ENCODE measurements at regions of chr4 and their contacts with region 1.

Region 1: GRCh38 chr4:139099366-139099982 is 77.5 kb downstream of the ELF2 start:
- DNase-seq: peak; percentile 56 to 81 (median 64)
- H3K4me3 ChIP-seq: no peak overlapping the region
- H3K4me3 Mint-ChIP-seq: no peak overlapping the region
- H3K27ac ChIP-seq: no peak overlapping the region
- H3K27ac Mint-ChIP-seq: peak overlapping the region in 1 of 8 donors; percentile 4
- H3K4me1 ChIP-seq: no peaks in the 10 kb centered on the region
- H3K4me1 Mint-ChIP-seq: peaks cover 0 to 4% (median 2%) of the 10 kb centered on the region in 3 donors
- H3K27me3 ChIP-seq: no peaks in the 10 kb centered on the region
- H3K27me3 Mint-ChIP-seq: no peaks in the 10 kb centered on the region

Region 2: DNA sequence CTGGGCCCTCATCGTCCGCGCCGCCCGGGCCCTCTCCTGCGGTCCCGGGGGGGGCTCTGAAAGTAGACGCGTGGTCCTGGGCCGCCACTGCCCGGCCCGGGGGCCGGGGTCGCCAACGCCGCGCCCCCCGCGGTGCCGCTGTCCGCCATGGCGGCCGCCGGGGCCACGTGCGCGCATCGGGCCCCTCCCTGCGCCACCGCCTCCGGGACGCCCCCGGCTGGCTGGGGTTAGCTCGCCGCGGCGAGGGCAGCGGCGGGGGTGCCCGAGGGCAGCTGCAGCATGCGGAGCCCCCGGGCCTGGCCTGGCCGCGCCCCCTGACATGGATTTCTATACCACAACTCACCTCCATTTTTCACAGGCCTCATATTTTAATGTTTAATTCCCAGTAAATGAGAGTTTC is 15.8 kb after region 1 on chr4:
- CTCF ChIA-PET with region 1: no interaction called
- POLR2A ChIA-PET with region 1: no interaction called
- DNase-seq: no peak
- H3K4me3 ChIP-seq: no peak overlapping the region
- H3K4me3 Mint-ChIP-seq: no peak overlapping the region
- H3K27ac ChIP-seq: no peak overlapping the region
- H3K27ac Mint-ChIP-seq: no peak overlapping the region
- H3K4me1 ChIP-seq: no peaks in the 10 kb centered on the region
- H3K4me1 Mint-ChIP-seq: no peaks in the 10 kb centered on the region
- H3K27me3 ChIP-seq: no peaks in the 10 kb centered on the region
- H3K27me3 Mint-ChIP-seq: no peaks in the 10 kb centered on the region

Region 3: GRCh38 chr4:139163806-139164206 is 64.3 kb after region 1 on chr4:
- CTCF ChIA-PET with region 1: no interaction called
- POLR2A ChIA-PET with region 1: interaction called, 14 read pairs
- DNase-seq: no peak
- H3K4me3 ChIP-seq: no peak overlapping the region
- H3K4me3 Mint-ChIP-seq: no peak overlapping the region
- H3K27ac ChIP-seq: no peak overlapping the region
- H3K27ac Mint-ChIP-seq: no peak overlapping the region
- H3K4me1 ChIP-seq: no peaks in the 10 kb centered on the region
- H3K4me1 Mint-ChIP-seq: peaks cover 12 to 21% (median 15%) of the 10 kb centered on the region in 3 donors
- H3K27me3 ChIP-seq: no peaks in the 10 kb centered on the region
- H3K27me3 Mint-ChIP-seq: no peaks in the 10 kb centered on the region

Region 4: GRCh38 chr4:139367421-139368090 is 268.1 kb after region 1 on chr4:
- CTCF ChIA-PET with region 1: no interaction called
- POLR2A ChIA-PET with region 1: interaction called, 11 read pairs
- DNase-seq: no peak
- H3K4me3 ChIP-seq: no peak overlapping the region
- H3K4me3 Mint-ChIP-seq: no peak overlapping the region
- H3K27ac ChIP-seq: no peak overlapping the region
- H3K27ac Mint-ChIP-seq: peak overlapping the region in 4 of 8 donors; percentile 4 to 76 (median 14)
- H3K4me1 ChIP-seq: no peaks in the 10 kb centered on the region
- H3K4me1 Mint-ChIP-seq: peaks cover 0 to 7% (median 7%) of the 10 kb centered on the region in 3 donors
- H3K27me3 ChIP-seq: no peaks in the 10 kb centered on the region
- H3K27me3 Mint-ChIP-seq: no peaks in the 10 kb centered on the region

Region 5: DNA sequence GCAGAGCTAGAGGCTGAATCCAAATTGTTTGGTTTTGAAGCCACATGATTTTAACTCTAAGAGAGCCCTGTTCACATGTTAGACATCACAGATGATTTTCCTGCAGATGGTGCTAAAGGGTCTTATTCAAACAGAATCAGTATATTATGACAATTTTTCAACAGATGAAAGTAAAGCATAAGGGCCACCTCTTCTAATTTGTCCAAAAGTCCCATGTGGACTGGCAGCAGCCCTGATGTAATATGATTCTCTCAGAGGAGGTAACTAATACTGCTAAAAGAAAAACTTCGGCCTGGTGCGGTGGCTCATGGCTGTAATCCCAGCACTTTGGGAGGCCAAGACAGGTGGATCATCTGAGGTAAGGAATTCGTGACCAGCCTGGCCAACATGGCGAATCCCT is 482.6 kb after region 1 on chr4:
- CTCF ChIA-PET with region 1: no interaction called
- POLR2A ChIA-PET with region 1: no interaction called
- DNase-seq: no peak
- H3K4me3 ChIP-seq: no peak overlapping the region
- H3K4me3 Mint-ChIP-seq: no peak overlapping the region
- H3K27ac ChIP-seq: no peak overlapping the region
- H3K27ac Mint-ChIP-seq: no peak overlapping the region
- H3K4me1 ChIP-seq: no peaks in the 10 kb centered on the region
- H3K4me1 Mint-ChIP-seq: no peaks in the 10 kb centered on the region
- H3K27me3 ChIP-seq: peaks cover 5% of the 10 kb centered on the region
- H3K27me3 Mint-ChIP-seq: peaks cover 14 to 33% of the 10 kb centered on the region in 2 donors

Measured in CD8-positive, alpha-beta memory T cell (primary cell).